HEK293T (cell line): ENCODE measurements at regions of chr17 and their contacts with region 1.

Region 1: DNA sequence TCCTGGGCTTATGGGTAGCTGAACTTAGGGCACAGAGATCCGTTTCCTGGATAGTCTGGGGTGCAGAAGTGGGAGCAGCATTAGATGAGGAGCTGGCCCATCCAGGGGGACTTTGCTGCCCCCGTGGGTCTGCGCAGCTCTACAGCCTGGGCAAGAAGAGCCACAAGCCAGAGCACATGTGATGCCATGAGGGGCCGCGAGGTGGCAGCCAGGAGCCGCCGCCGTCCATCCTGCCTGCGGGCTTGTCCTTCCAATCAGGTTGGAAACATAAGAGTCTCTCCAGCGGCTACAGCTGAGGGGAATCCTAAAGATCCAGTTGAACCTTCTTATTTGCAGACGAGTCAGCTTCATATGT is 21.9 kb downstream of the C1QTNF1 start:
- DNase-seq: peak; percentile 88

Region 2: DNA sequence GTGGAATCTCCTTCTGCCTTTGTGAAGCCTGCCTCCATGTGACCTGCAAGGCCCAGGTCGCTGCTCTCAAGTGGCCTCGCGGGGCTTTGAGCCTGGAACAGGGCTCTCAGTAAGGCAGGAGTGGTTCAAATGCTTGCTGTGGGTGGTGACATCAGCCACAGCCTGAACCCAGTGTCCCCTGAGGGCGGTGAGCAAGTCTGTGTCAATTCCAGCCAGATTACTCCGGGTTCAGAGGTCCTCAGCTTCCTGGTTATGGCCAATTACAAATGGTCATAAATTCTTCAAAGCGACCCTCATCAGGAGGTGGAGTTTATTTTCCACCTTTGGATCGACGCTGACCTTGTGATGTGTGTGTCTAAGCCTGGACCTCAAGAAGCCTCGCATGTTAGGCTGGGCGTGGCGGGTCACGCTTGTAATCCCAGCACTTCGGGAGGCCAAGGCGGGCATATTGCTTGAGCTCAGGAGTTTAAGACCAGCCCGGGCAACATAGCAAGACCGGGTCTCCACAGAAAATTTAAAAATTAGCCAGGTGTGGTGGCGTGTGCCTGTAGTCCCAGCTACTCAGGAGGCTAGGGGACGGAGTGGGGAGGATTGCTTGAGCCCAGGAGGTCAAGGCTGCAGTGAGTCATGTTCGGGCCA is 83.4 kb before region 1 on chr17:
- CTCF ChIA-PET with region 1: no interaction called
- POLR2A ChIA-PET with region 1: no interaction called
- DNase-seq: no peak

Region 3: DNA sequence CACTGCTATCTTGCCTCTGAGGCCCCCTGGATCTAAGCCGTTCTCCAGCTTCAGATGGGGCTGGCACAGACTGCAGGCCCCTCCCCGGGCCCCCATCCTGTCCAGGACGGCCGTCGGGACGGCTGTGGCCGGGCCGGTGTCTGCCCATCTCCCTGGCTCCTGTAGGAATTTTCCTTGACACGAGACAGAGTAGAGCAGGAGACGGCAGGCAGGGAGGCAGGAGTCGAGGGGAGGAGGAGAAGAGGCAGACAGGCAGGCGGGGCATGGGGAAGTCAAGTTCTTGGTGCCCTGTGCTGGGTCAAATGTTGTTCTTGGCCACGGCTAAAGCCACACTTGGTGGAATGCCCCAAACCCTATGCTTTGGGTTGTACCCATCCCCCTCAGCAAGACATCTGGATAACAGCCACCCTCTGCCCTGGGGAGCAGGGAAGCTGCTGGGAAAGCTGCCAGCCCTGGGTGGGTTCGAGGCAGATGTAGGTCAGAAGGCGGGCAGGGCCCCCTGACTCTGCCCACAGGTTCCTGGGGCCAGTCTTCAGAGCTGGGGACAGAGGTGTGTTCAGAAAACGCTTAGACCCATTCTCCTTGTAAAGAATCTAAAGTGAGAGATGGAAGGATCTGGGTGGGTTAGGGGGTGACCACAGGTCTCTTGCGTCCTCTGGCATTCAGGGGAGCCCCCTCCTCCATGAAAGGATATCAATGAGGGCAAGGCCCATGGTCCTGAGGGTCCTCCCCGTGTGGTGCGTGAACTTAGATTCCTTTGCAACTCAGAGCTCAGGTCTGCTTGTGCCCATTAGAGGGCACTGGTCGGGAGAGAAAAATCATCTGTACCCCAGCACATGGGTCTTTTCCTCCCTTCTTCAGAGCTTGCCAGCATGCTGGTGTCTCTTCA is 17.6 kb before region 1 on chr17:
- CTCF ChIA-PET with region 1: interaction called, 17 read pairs
- POLR2A ChIA-PET with region 1: no interaction called
- DNase-seq: no peak

Region 4: DNA sequence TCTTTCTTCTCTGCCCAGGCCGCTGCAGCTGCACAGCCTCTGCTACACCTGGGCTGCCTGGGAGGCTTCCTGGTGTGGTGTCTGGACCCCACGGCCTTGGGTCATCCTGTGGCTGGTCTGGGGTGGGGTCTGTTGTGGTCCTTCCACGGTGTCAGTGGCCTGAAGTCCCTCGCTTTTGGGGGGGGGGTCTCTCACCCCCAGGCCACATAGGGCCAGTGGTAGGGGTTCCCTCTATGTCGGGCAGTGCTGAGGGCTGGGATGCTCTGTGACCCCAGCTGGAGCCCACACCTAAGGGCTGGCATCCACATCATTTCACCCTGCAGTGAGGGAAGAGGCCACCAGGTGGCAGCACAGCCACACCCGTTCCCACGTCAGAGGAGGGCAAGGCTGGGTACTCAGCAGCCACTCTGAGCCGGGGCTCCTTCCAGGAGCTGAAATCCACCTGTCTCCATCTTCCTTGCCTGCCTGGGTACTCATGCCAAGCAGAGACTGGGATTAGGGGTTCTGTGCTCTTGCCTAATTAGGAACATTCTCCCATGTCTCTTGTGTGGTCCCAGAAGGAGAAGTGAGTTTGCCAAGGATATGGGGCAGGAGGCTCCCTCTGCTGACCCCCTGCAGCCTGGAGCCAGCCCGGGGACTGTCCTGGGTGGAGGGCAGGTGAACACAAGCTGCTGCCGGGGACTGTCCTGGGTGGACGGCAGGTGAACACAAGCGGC is 41.8 kb after region 1 on chr17:
- CTCF ChIA-PET with region 1: interaction called, 12 read pairs
- POLR2A ChIA-PET with region 1: no interaction called
- DNase-seq: peak; percentile 84

Region 5: DNA sequence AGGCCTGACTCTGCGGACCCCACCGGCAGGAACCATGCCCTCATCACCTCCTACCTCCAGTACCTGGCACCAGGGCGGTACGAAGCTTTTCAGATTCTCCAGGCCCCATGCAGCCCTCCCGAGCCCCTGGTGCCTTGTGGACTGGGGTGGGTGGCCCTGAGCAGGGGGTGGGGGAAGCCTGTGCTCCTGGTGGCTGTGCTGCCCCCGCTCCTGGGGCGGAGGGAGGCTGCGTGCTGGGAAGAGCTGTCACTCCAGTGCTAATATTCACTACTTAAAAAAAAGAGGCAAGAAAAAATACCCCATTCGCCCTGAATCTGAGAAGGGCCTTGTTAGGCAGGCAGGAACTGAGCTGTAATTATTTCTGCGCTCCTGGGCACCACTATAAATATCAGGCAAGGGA is 140.6 kb after region 1 on chr17:
- CTCF ChIA-PET with region 1: no interaction called
- POLR2A ChIA-PET with region 1: no interaction called
- DNase-seq: no peak